Endothelial cell of umbilical vein (primary cell): ENCODE measurements at regions of chr7 and their contacts with region 1.

Region 1: DNA sequence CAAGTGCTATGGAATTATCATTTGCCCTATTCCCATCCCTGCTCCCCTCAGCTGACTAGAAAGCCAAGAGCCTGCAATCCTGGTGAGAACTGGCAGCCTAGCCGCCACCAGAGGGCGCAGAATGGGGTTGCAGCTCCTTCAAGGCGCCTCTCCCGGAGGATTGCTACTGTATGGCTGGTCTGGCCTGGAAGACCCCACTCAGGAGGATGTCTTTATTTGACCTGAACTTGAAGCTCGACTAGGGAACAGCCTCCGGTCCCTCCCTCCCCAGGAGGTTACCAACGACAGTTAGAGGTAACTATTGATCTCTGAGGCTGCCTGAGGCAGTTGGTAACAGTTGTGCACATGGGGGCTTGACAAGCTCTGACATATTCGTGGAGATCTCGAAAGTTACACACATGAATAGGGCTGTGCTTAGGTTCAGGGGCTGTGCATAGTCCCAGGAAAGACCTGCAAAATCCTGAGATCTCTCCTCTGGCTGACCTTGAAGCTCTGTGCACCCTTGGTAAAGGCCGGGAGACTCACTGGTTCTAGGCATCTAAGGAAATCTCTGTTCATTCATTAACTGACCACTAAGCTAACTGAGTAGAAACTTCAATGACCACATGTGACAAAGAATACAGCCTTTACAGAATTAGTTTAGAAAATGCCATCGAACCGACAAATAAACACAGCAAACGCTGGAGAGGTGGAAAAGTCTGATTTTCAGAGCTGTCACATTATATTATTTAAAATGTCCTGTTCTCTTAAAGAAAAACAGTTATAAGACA is 65.7 kb downstream of the TSPAN12 start:
- DNase-seq: peak; percentile 72
- H3K4me3 ChIP-seq: no peak overlapping the region
- H3K27ac ChIP-seq: no peak overlapping the region
- H3K4me1 ChIP-seq: peaks cover 8% of the 10 kb centered on the region
- H3K27me3 ChIP-seq: no peaks in the 10 kb centered on the region
- CTCF ChIP-seq: peak; percentile 95
- POLR2A ChIP-seq: no peak

Region 2: DNA sequence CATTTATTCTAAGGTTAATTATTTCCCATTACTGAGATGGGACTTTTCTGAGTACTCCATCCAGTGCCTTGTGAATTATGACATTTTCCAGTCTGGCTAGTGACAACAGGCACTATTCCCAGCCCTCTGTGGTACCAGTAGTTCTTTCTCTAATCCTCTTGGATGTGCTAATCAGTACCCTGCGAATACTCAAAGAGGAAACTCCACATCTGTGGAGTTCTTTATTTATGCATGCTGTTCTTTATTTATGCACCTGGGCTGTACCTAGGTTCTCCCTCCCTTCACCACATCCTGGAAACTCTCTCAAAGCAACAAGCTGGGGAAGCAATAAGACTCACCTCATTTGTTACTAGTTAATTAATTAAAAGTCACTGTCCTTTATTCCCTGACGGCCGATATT is 17.8 kb before region 1 on chr7:
- CTCF ChIA-PET with region 1: interaction called, 12 read pairs
- POLR2A ChIA-PET with region 1: no interaction called
- dilution Hi-C with region 1: no loop called
- intact Hi-C with region 1: no loop called
- DNase-seq: no peak
- H3K4me3 ChIP-seq: no peak overlapping the region
- H3K27ac ChIP-seq: no peak overlapping the region
- H3K4me1 ChIP-seq: no peaks in the 10 kb centered on the region
- H3K27me3 ChIP-seq: no peaks in the 10 kb centered on the region
- CTCF ChIP-seq: no peak
- POLR2A ChIP-seq: no peak

Region 3: GRCh38 chr7:120941064-120941463 is 148.8 kb after region 1 on chr7:
- CTCF ChIA-PET with region 1: interaction called, 64 read pairs
- POLR2A ChIA-PET with region 1: no interaction called
- dilution Hi-C with region 1: no loop called
- intact Hi-C with region 1: loop called (anchors 1 kb)
- DNase-seq: peak; percentile 75
- H3K4me3 ChIP-seq: no peak overlapping the region
- H3K27ac ChIP-seq: peak overlapping the region; percentile 87
- H3K4me1 ChIP-seq: peaks cover 46% of the 10 kb centered on the region
- H3K27me3 ChIP-seq: no peaks in the 10 kb centered on the region
- CTCF ChIP-seq: peak in 1 of 2 donors; percentile 26
- POLR2A ChIP-seq: no peak

Region 4: GRCh38 chr7:120987683-120988590 is 195.7 kb after region 1 on chr7:
- CTCF ChIA-PET with region 1: interaction called, 23 read pairs
- POLR2A ChIA-PET with region 1: no interaction called
- dilution Hi-C with region 1: no loop called
- intact Hi-C with region 1: loop called (anchors 1 kb)
- DNase-seq: peak; percentile 89
- H3K4me3 ChIP-seq: peak overlapping the region; percentile 39 to 80 (median 64)
- H3K27ac ChIP-seq: no peak overlapping the region
- H3K4me1 ChIP-seq: peaks cover 10% of the 10 kb centered on the region
- H3K27me3 ChIP-seq: peaks cover 0 to 9% of the 10 kb centered on the region in 2 experiments
- CTCF ChIP-seq: peak; percentile 95 to 97
- POLR2A ChIP-seq: no peak

Region 5: DNA sequence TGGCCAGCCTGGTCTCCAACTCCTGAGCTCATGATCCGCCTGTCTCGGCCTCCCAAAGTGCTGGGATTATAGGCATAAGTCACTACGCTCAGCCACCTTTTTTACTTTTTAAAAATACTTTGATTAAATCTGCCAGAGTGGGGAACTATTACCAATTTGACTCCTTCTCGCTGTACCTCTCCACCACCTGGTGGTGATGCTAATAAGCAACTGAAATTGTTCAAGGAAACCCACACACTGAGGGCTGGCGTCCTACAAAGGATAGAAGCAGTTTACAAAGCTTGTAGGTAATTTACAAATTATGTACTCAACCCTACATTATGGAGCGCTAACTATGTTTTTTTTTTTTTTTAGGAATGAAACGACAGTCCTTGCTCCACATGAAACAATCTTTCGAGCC is 307.3 kb after region 1 on chr7:
- CTCF ChIA-PET with region 1: interaction called, 15 read pairs
- POLR2A ChIA-PET with region 1: no interaction called
- dilution Hi-C with region 1: no loop called
- intact Hi-C with region 1: no loop called
- DNase-seq: no peak
- H3K4me3 ChIP-seq: no peak overlapping the region
- H3K27ac ChIP-seq: no peak overlapping the region
- H3K4me1 ChIP-seq: no peaks in the 10 kb centered on the region
- H3K27me3 ChIP-seq: no peaks in the 10 kb centered on the region
- CTCF ChIP-seq: no peak
- POLR2A ChIP-seq: no peak